Gastrocnemius medialis (tissue), 4 donors: ENCODE measurements at regions of chr7 and their contacts with region 1.

Region 1: GRCh38 chr7:35624299-35625186 is 70.4 kb downstream of the HERPUD2 start:
- DNase-seq: no peak
- ATAC-seq: peak; percentile 56 to 81
- H3K4me3 ChIP-seq: no peak overlapping the region
- H3K27ac ChIP-seq: no peak overlapping the region
- H3K4me1 ChIP-seq: no peaks in the 10 kb centered on the region
- H3K27me3 ChIP-seq: no peaks in the 10 kb centered on the region
- CTCF ChIP-seq: peak; percentile 49 to 83 (median 62)
- POLR2A ChIP-seq: no peak

Region 2: GRCh38 chr7:34823640-34824258 is 800.8 kb before region 1 on chr7:
- in situ Hi-C with region 1: no loop called
- intact Hi-C with region 1: loop called (anchors 10 kb)
- DNase-seq: no peak
- ATAC-seq: no peak
- H3K4me3 ChIP-seq: no peak overlapping the region
- H3K27ac ChIP-seq: no peak overlapping the region
- H3K4me1 ChIP-seq: no peaks in the 10 kb centered on the region
- H3K27me3 ChIP-seq: no peaks in the 10 kb centered on the region
- CTCF ChIP-seq: peak; percentile 37 to 76 (median 61)
- POLR2A ChIP-seq: no peak

Region 3: GRCh38 chr7:35424869-35425495 is 199.6 kb before region 1 on chr7:
- in situ Hi-C with region 1: loop called in 1 of 4 experiments (anchors 10 kb)
- intact Hi-C with region 1: loop called (anchors 2 kb)
- DNase-seq: no peak
- ATAC-seq: no peak
- H3K4me3 ChIP-seq: no peak overlapping the region
- H3K27ac ChIP-seq: no peak overlapping the region
- H3K4me1 ChIP-seq: no peaks in the 10 kb centered on the region
- H3K27me3 ChIP-seq: peaks cover 0 to 5% (median 0%) of the 10 kb centered on the region in 3 donors
- CTCF ChIP-seq: peak; percentile 24 to 71 (median 41)
- POLR2A ChIP-seq: no peak

Region 4: GRCh38 chr7:35555934-35556333 is 68.6 kb before region 1 on chr7:
- in situ Hi-C with region 1: no loop called
- intact Hi-C with region 1: loop called (anchors 1 kb)
- DNase-seq: no peak
- ATAC-seq: no peak
- H3K4me3 ChIP-seq: no peak overlapping the region
- H3K27ac ChIP-seq: no peak overlapping the region
- H3K4me1 ChIP-seq: no peaks in the 10 kb centered on the region
- H3K27me3 ChIP-seq: no peaks in the 10 kb centered on the region
- CTCF ChIP-seq: no peak
- POLR2A ChIP-seq: no peak